GM13976 (cell line): ENCODE measurements at regions of chr1 and their contacts with region 1.

Region 1: DNA sequence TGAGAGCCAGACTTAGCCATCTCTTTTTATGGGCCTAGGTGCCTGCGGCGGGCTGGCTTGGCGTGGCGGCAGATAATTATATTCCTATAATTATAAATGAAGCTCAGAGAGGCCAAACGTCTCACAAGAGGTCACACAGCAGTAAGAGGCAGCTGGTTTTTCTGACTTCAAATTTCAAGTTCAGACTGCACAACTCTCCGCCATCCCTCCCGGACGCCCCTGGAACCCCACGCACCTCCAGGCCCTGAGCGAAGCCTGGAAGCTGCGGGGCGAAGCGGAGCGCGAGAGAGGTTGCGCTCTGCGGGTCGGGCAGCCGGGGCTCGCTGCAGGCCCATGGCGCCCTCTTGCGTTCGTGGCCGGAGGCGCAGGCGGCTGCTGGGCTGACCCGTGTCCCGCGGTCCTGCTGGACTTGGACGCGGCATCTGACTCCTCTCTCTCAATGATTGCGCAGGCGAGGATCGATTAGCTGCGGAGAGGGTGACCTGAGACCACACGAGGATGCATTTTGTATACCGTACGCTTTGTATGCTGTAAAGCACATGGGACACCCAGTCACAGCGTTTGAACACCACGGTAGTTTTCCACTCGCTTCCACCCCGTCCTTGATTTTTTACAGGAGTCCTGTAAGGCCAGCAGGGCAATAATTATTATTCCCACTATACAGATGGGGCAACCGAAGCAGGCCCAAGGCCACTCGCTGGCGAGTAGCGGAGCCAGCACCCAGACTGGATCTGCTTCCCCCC is 272.7 kb downstream of the FOXD2 start:
- DNase-seq: peak; percentile 94
- CTCF ChIP-seq: peak; percentile 95

Region 2: GRCh38 chr1:47179017-47179987 is 531.2 kb before region 1 on chr1:
- in situ Hi-C with region 1: loop called (anchors 25 kb)
- DNase-seq: peak; percentile 91
- CTCF ChIP-seq: peak; percentile 94

Region 3: DNA sequence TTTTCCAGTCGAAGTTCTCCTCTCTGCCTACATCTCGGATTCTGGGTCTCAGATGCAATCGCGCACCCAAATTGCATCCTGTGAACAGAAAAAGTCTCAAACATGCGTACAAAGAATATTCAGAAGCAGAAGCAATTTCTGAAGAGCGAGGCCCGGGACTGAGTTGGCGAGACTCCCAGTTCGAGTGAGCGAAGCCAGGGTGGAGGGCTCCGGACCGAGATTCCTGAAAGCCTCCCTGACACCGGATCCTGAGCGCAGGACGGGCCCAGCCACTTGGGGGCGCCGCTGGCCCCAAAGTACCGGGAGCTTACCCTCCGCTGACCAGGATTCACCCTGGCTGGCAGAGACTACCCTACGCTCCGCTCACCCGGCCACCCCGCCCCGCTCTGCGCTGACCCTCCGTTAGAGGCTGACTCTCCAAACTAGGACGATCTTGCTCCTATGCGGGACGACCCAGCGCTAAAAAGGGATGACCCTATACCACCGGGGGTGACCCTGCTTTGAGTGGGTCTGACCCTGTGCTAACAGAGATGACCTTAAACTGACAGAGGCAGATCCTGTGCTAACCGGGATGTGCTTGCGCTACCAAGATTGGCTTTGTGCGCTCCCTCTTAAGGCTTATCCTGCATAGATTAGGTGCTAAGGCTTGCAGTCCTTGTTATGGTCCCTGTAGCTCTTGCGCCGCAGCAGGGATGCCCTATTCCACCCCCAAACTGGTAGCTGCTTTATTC is 260.5 kb before region 1 on chr1:
- in situ Hi-C with region 1: loop called (anchors 10 kb)
- DNase-seq: peak; percentile 57
- CTCF ChIP-seq: peak; percentile 56